Caco-2 (cell line): ENCODE measurements at regions of chr2 and their contacts with region 1.

Region 1: DNA sequence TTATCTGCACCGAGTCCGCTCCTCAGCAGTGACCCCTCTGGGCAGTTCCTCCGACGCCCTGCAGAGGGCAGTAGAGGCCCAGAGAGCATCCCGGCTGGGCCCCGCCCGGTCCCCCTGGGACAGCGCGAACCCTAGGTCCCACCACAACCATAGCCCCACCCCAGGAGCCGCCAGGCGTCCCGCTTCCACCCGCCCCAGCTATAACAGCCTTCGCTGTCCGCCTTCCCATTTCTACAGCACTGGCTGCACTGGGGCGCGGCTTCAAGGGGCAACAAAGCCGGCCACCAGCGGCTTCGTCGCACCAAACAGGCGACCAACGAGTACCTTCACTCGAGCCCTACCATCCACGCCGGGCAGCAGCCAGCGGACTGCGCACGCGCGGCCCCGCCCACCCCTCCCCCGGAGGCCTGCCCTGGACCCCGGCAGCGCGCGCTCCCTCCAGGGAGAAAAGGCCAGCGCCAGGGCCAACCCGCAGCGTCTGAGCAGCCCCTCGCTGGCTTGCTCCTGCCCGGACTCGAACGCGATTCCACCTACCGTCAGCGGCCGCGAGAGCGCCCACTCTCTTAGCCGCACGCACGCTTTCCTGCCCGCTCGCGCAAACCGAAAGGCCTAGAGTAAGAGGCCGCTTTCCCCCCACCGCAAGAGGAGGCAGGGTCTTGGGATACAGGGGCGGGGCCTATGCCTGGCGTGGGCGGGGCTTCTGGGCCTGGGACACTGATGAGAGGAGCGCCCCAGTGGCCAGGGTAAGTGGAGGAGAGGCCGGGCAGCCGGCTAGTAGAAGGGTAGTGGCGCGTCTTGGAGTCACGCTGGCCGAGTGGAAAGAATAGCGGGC is at the start of gene NHEJ1:
- DNase-seq: peak; percentile 97 to 98
- H3K4me3 ChIP-seq: peak within 1 kb of the TSS; percentile 73
- H3K4me3 Mint-ChIP-seq: peak within 1 kb of the TSS; percentile 78
- H3K27ac Mint-ChIP-seq: peak within 1 kb of the TSS; percentile 84
- H3K4me1 ChIP-seq: peaks cover 11% of the 10 kb centered on the region; the same call in 1 of the 2 replicates
- H3K4me1 Mint-ChIP-seq: peaks cover 14% of the 10 kb centered on the region
- H3K27me3 ChIP-seq: no peaks in the 10 kb centered on the region
- H3K27me3 Mint-ChIP-seq: no peaks in the 10 kb centered on the region
- CTCF ChIP-seq: peak; percentile 98
- total RNA-seq, gene NHEJ1: 28.5 and 29.6 TPM in 2 replicates

Region 2: GRCh38 chr2:219171231-219171651 is 10.8 kb after region 1 on chr2:
- CTCF ChIA-PET with region 1: interaction called, 3 read pairs
- POLR2A ChIA-PET with region 1: interaction called, 3 read pairs
- intact Hi-C with region 1: loop called (anchors 1 kb)
- DNase-seq: peak; percentile 74 to 79
- H3K4me3 ChIP-seq: no peak overlapping the region
- H3K4me3 Mint-ChIP-seq: no peak overlapping the region
- H3K27ac Mint-ChIP-seq: peak overlapping the region; percentile 64
- H3K4me1 ChIP-seq: peaks cover 21% of the 10 kb centered on the region
- H3K4me1 Mint-ChIP-seq: peaks cover 28% of the 10 kb centered on the region
- H3K27me3 ChIP-seq: no peaks in the 10 kb centered on the region
- H3K27me3 Mint-ChIP-seq: no peaks in the 10 kb centered on the region
- CTCF ChIP-seq: peak; percentile 64 to 79

Region 3: GRCh38 chr2:219206442-219207253 is 46.2 kb after region 1 on chr2 and contains the start of gene ZFAND2B:
- CTCF ChIA-PET with region 1: interaction called, 3 read pairs
- POLR2A ChIA-PET with region 1: no interaction called
- intact Hi-C with region 1: loop called (anchors 1 kb)
- DNase-seq: peak; percentile 93 to 98
- H3K4me3 ChIP-seq: peak within 1 kb of the TSS; percentile 78
- H3K4me3 Mint-ChIP-seq: peak within 1 kb of the TSS; percentile 81
- H3K27ac Mint-ChIP-seq: peak within 1 kb of the TSS; percentile 84
- H3K4me1 ChIP-seq: peaks cover 8% of the 10 kb centered on the region
- H3K4me1 Mint-ChIP-seq: peaks cover 5% of the 10 kb centered on the region
- H3K27me3 ChIP-seq: no peaks in the 10 kb centered on the region
- H3K27me3 Mint-ChIP-seq: no peaks in the 10 kb centered on the region
- CTCF ChIP-seq: no peak
- total RNA-seq, gene ZFAND2B: 37.3 and 41.8 TPM in 2 replicates

Region 4: DNA sequence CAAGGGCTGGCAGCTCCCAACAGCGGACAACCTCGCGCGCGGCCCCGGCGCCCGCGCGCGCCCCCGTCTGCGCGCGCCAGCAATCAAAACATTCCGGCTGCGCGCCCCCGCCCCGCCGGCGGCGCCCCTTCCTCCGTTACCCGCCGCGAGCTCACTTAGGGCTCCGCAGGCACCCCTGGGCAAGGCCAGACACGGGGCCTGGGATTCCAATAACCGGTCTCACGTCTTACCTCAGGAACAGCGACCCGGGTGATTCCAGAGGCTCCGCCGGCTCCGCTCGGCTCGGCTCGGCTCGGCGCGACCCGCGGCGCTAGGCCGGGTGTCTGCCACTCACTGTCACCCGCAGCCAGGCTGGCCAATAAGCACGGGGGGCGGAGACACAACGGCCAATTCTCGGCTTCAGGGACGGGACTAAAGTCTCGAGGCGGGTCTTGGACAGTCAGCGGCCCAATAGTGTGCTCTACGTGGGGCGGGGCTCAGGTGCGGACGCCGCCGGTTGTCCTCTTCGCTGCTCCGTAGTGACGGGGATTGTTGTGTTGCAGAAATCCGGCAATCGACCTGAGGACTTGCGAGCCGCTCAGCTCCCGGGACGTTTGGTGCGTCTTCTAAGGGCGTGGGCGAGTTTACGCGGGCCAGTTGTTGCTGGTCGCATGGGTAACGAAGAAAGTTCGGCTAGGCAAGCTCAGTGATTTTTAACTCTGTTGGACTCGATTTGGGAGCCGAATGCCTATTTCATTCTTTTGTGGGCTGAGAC is 69.1 kb after region 1 on chr2 and contains the starts of genes ANKZF1 and ATG9A:
- CTCF ChIA-PET with region 1: no interaction called
- POLR2A ChIA-PET with region 1: no interaction called
- intact Hi-C with region 1: loop called (anchors 1 kb)
- DNase-seq: peak; percentile 99
- H3K4me3 ChIP-seq: peak within 1 kb of the TSS; percentile 69
- H3K4me3 Mint-ChIP-seq: peak within 1 kb of the TSS; percentile 100
- H3K27ac Mint-ChIP-seq: peak within 1 kb of the TSS; percentile 100
- H3K4me1 ChIP-seq: 0 out of 2 replicates have a peak, but pooled peaks cover 4% of the 10 kb centered on the region
- H3K4me1 Mint-ChIP-seq: no peaks in the 10 kb centered on the region
- H3K27me3 ChIP-seq: no peaks in the 10 kb centered on the region
- H3K27me3 Mint-ChIP-seq: no peaks in the 10 kb centered on the region
- CTCF ChIP-seq: no peak
- total RNA-seq, gene ANKZF1: 50.7 and 51.5 TPM in 2 replicates
- total RNA-seq, gene ATG9A: 59.6 and 62.9 TPM in 2 replicates

Region 5: DNA sequence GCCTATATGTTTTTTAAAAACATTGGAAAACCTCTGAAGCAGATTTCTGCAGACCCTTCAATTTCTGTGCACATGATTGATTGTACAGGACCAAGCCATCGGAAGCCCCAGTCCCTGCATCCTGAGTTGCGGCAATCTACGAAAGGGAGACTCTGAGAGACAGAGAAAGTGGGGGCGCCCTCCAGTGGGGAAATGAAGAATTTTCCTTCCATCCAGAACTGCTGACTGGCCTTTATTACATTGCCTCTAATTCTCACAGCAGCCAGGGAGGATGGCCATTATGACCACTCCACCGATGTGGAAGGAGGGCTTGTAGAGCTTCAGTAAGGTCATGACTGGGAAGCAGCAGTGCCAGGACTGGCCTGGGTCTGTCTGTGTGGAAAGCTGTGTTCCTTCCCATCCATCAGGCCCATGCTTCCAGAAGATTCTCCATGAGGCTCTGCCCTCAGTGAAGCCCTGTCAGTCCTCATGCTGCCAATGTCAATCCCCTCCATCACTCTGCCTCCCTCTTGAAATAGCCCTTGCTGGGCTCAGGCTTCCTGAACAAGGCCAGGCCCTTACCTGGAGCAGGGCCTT is 192.1 kb after region 1 on chr2:
- CTCF ChIA-PET with region 1: no interaction called
- POLR2A ChIA-PET with region 1: no interaction called
- intact Hi-C with region 1: loop called (anchors 2 kb)
- DNase-seq: peak; percentile 56 to 69
- H3K4me3 ChIP-seq: no peak overlapping the region
- H3K4me3 Mint-ChIP-seq: no peak overlapping the region
- H3K27ac Mint-ChIP-seq: no peak overlapping the region
- H3K4me1 ChIP-seq: no peaks in the 10 kb centered on the region
- H3K4me1 Mint-ChIP-seq: no peaks in the 10 kb centered on the region
- H3K27me3 ChIP-seq: no peaks in the 10 kb centered on the region
- H3K27me3 Mint-ChIP-seq: peaks cover 16% of the 10 kb centered on the region
- CTCF ChIP-seq: peak; percentile 51 to 54